ENCODE measurements at regions of chr2 and their contacts with region 1.

Region 1: GRCh38 chr2:39913648-39914461 is 134.8 kb upstream of the THUMPD2 start:
- DNase-seq: peak in 1 of 6 donors; percentile 15
- ATAC-seq: peak; percentile 75 to 95 (median 93)
- H3K4me3 ChIP-seq: no peak overlapping the region
- H3K27ac ChIP-seq: no peak overlapping the region
- H3K4me1 ChIP-seq: no peaks in the 10 kb centered on the region
- H3K27me3 ChIP-seq: no peaks in the 10 kb centered on the region
- CTCF ChIP-seq: peak; percentile 35 to 75 (median 67)

Region 2: GRCh38 chr2:40554668-40555285 is 640.9 kb after region 1 on chr2:
- intact Hi-C with region 1: loop called in 2 of 3 experiments (anchors 10 kb)
- DNase-seq: peak in 5 of 6 donors; percentile 3 to 69 (median 27)
- ATAC-seq: peak in 3 of 4 donors; percentile 71 to 89 (median 89)
- H3K4me3 ChIP-seq: no peak overlapping the region
- H3K27ac ChIP-seq: no peak overlapping the region
- H3K4me1 ChIP-seq: no peaks in the 10 kb centered on the region
- H3K27me3 ChIP-seq: no peaks in the 10 kb centered on the region
- CTCF ChIP-seq: peak; percentile 30 to 72 (median 62)

Region 3: DNA sequence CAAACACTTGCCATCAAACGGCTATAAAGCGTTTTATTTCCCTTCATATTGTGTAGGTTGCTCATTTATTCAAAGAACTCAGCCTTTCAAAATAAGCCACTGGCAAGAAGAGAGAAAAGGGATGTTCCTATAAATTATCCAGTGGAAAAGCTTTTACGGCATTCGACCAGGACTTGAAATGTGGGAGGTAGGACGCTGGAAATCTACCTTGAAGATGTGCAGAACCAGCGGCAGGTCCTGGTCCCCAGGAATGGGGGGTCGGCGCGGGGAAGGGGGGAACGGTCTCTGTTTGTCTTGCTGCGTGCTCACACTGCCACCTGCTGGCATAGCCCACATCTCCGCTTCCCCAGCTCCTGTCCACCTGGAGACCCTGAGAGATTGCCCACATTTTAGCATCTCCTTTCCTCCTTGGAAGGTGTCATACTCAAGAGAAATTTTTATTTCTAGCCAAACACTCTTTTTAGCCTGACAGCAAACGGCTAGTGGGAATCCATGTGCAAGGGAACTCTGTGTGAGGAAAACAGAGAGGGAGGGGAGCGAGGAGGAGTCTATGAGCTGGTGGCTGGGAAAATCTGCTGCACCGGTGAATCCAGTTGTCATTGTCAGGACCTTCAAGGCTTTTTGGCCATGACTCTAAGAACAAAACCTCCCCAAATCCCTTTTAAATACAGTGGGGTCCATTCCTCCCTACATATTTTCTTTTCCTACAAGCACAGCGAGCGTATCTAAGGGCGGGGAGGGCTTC is 1785.0 kb after region 1 on chr2:
- intact Hi-C with region 1: loop called in 1 of 3 experiments (anchors 5 kb)
- DNase-seq: peak in 2 of 6 donors; percentile 21 to 23
- ATAC-seq: peak in 3 of 4 donors; percentile 30 to 49 (median 35)
- H3K4me3 ChIP-seq: no peak overlapping the region
- H3K27ac ChIP-seq: no peak overlapping the region
- H3K4me1 ChIP-seq: no peaks in the 10 kb centered on the region
- H3K27me3 ChIP-seq: no peaks in the 10 kb centered on the region
- CTCF ChIP-seq: peak; percentile 9 to 51 (median 36)

Measured in pancreas (tissue), 10 donors.